ENCODE measurements at regions of chr16 and their contacts with region 1.

Region 1: DNA sequence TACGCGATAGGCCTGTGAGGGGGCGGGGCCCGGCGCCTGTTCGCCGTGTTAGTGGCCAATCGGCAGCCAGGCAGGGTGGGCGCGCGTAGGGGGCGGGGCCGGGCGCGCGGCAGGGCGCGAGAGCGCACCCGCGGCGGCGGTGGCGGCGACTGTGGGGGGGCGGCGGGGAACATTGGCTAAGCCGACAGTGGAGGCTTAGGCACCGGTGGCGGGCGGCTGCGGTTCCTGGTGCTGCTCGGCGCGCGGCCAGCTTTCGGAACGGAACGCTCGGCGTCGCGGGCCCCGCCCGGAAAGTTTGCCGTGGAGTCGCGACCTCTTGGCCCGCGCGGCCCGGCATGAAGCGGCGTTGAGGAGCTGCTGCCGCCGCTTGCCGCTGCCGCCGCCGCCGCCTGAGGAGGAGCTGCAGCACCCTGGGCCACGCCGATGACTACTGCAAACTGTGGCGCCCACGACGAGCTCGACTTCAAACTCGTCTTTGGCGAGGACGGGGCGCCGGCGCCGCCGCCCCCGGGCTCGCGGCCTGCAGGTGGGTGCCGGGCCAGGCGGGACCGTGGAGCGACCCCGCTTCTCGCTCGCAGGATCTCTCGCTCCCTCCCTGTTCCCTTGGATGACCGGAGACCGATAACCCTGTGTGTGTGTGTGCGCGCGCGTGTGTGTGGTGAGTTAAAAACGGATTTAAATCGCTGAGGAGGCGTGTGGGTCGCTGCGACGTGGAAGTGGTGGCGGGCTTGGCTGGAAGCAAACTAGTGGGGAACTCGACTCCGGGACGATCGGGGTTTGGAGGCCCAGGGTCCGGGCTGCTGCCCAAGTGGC is at the start of gene NFATC3:
- DNase-seq: peak; percentile 100
- ATAC-seq: peak; percentile 62
- H3K4me3 Mint-ChIP-seq: peak within 1 kb of the TSS; percentile 89
- H3K27ac Mint-ChIP-seq: peak within 1 kb of the TSS; percentile 94
- H3K4me1 Mint-ChIP-seq: peaks cover 64% of the 10 kb centered on the region
- H3K27me3 Mint-ChIP-seq: no peaks in the 10 kb centered on the region
- total RNA-seq, gene NFATC3: 68.4 to 81.2 TPM

Region 2: DNA sequence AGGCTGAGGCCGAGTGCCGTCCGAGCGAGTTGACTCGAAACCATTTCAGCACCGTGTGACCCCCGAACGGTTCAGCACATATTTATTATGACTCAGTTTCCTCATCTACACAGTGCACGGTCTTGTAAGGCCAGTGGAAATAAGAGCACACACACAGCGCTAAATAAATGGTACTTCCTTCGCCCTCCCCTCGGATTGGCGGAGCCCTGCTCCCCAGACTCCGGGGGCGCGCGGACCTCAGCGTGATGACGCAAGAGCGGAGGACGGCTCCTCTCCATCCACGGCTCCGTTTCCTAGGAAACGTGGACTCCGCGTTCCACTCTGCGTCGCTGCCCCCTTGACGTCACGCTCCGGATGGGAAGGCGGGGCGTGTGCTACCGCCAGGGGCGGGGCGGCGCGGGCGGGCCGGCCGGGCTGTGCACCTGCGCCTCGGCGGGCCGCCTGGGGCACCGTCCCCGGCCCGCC is 424.9 kb before region 1 on chr16 and contains the start of gene PARD6A:
- CTCF ChIA-PET with region 1: no interaction called
- POLR2A ChIA-PET with region 1: no interaction called
- intact Hi-C with region 1: loop called (anchors 1 kb)
- DNase-seq: peak; percentile 98
- ATAC-seq: peak; percentile 83
- H3K4me3 Mint-ChIP-seq: peak within 1 kb of the TSS; percentile 90
- H3K27ac Mint-ChIP-seq: peak within 1 kb of the TSS; percentile 91
- H3K4me1 Mint-ChIP-seq: peaks cover 21% of the 10 kb centered on the region
- H3K27me3 Mint-ChIP-seq: no peaks in the 10 kb centered on the region
- total RNA-seq, gene PARD6A: 7.8 to 8.7 TPM

Region 3: DNA sequence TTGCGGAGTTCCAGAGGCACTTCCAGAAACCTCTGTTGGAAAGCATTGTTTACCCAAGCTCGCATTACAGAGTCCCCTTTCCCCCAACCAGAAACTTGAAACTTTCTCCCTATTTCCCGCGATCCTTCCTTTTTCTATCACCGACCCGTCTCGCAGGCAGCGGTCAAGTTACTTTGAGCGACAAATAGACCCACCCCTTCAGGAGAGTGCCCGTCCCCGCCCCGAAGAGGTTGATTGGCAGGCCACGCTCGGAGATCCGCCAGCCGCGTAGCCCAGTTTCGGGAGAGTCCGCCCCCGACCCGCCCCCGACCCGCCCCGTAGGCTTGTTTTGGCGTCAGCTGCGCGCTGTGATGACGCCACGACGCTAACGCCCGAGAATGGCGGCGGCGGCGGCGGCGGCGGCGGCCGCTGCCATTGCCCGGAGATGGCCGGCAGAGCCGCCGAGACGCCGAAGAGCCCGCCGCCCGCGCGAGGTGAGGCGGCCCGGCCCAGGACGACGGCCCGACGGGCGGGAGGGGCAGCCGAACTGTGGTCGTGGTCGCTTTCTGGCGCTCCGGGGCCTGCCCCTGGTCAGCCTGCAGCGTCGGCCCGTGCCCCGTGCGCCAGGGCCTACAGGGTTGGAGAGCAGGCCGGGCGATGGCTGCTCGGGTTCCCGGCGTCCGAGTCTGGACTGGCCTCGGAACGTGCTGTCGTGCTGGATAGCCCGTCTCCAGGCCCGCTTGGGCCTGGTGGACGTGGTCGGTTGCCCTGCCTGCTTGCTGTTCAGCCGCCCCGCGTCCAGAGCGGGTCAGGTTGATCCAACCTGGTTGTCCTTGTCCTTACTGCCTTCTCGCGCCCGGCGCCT is 192.3 kb before region 1 on chr16 and contains the start of gene PSKH1:
- CTCF ChIA-PET with region 1: no interaction called
- POLR2A ChIA-PET with region 1: no interaction called
- intact Hi-C with region 1: loop called in 1 of 2 experiments (anchors 1 kb)
- DNase-seq: peak; percentile 97
- ATAC-seq: peak; percentile 99
- H3K4me3 Mint-ChIP-seq: peak within 1 kb of the TSS; percentile 92
- H3K27ac Mint-ChIP-seq: peak within 1 kb of the TSS; percentile 92
- H3K4me1 Mint-ChIP-seq: peaks cover 30% of the 10 kb centered on the region
- H3K27me3 Mint-ChIP-seq: no peaks in the 10 kb centered on the region
- total RNA-seq, gene PSKH1: 11.7 to 11.9 TPM

Region 4: GRCh38 chr16:67975321-67976105 is 110.0 kb before region 1 on chr16:
- CTCF ChIA-PET with region 1: no interaction called
- POLR2A ChIA-PET with region 1: no interaction called
- intact Hi-C with region 1: no loop called
- DNase-seq: no peak
- ATAC-seq: no peak
- H3K4me3 Mint-ChIP-seq: no peak overlapping the region
- H3K27ac Mint-ChIP-seq: no peak overlapping the region
- H3K4me1 Mint-ChIP-seq: no peaks in the 10 kb centered on the region
- H3K27me3 Mint-ChIP-seq: no peaks in the 10 kb centered on the region

Region 5: DNA sequence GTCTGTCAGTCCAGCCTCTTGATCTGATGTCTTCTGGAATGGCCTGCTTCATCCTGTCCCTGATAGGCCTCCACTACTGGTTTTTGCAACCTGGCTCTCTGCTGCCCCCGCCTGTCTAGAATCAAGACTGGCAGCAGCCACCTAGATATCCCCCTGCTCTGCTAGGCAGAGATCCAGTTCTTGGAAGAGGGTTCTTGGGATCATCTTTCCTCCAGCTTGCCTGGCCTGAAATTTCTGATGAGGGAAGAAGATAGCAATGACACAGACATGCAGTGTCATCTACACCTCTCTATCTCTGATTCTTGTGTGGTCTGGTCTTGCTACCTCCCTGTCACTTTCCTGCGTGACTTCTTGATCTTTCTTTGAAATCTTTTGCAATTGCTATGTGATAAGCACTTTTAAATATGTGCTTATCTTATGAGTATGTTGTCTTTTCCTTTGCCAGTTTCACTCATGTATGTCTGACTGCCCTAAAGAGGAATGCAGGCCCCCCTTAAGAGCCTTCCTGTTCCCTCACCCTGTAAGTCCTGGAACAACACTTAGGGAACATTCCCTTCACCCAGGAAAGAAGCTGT is 20.6 kb before region 1 on chr16:
- CTCF ChIA-PET with region 1: interaction called, 11 read pairs
- POLR2A ChIA-PET with region 1: no interaction called
- intact Hi-C with region 1: loop called in 1 of 2 experiments (anchors 2 kb)
- DNase-seq: peak; percentile 85
- ATAC-seq: peak; percentile 81
- H3K4me3 Mint-ChIP-seq: no peak overlapping the region
- H3K27ac Mint-ChIP-seq: peak overlapping the region; percentile 69
- H3K4me1 Mint-ChIP-seq: peaks cover 67% of the 10 kb centered on the region
- H3K27me3 Mint-ChIP-seq: no peaks in the 10 kb centered on the region

Region 6: DNA sequence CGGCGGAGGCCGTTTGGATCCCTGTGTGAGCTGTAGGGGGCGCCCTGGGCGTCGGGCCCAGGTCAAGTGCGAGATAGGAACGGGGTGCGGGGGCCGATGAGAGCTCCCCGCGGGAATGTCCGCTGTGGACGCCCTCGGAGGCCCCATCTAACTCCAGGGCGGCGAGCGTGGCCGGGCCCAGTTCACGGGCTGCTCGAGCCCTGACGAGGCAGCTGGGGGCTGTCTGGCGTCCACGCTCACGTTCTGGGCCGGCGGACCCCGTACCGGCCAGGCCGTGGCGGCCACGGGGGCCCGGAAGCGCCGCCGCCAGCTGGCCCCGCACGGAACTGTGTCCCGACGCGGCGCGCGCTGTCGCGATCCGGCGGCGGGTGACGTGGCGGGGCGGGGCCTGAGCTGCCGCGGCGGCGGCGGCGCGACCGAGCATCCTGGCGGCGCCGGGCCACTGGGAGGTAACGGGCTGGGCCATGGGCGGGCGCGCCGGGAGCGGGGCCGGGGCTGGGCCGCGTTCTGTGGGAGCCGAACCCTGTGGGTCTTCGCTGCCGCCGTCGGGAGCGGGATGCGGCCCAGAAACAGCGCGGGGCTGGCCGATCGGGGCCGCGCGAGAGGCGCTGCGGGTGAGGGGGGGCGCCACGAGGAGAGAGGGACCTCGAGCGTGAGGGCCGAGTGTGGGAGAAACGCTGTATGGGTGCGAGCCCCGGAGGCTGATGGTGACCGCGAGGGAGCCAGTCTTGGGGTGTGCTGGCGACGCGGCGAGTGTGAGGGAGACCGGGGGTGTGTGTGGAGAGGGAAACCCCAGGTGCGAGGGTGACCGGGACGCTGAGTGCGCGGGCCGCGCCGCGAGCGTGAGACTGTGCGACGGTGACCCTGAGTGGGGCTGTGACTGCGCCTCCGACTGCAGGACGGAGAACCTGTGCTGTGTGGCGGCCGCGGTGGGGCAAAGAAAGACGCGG is 178.9 kb after region 1 on chr16 and contains the start of gene SLC7A6:
- CTCF ChIA-PET with region 1: no interaction called
- POLR2A ChIA-PET with region 1: interaction called, 4 read pairs
- intact Hi-C with region 1: loop called in 1 of 2 experiments (anchors 1 kb)
- DNase-seq: peak; percentile 92
- ATAC-seq: peak; percentile 69
- H3K4me3 Mint-ChIP-seq: peak within 1 kb of the TSS; percentile 91
- H3K27ac Mint-ChIP-seq: peak within 1 kb of the TSS; percentile 97
- H3K4me1 Mint-ChIP-seq: peaks cover 43% of the 10 kb centered on the region
- H3K27me3 Mint-ChIP-seq: no peaks in the 10 kb centered on the region
- total RNA-seq, gene SLC7A6: 55.7 to 58.7 TPM

Region 7: GRCh38 chr16:68921654-68922053 is 836.2 kb after region 1 on chr16:
- CTCF ChIA-PET with region 1: no interaction called
- POLR2A ChIA-PET with region 1: no interaction called
- intact Hi-C with region 1: no loop called
- DNase-seq: no peak
- ATAC-seq: no peak
- H3K4me3 Mint-ChIP-seq: no peak overlapping the region
- H3K27ac Mint-ChIP-seq: no peak overlapping the region
- H3K4me1 Mint-ChIP-seq: no peaks in the 10 kb centered on the region
- H3K27me3 Mint-ChIP-seq: no peaks in the 10 kb centered on the region

Region 8: GRCh38 chr16:69132424-69133252 is 1047.2 kb after region 1 on chr16 and contains the starts of genes CHTF8 and UTP4:
- CTCF ChIA-PET with region 1: no interaction called
- POLR2A ChIA-PET with region 1: no interaction called
- intact Hi-C with region 1: loop called in 1 of 2 experiments (anchors 2 kb)
- DNase-seq: peak; percentile 94
- ATAC-seq: peak; percentile 95
- H3K4me3 Mint-ChIP-seq: peak within 1 kb of the TSS; percentile 93
- H3K27ac Mint-ChIP-seq: peak within 1 kb of the TSS; percentile 93
- H3K4me1 Mint-ChIP-seq: peaks cover 59% of the 10 kb centered on the region
- H3K27me3 Mint-ChIP-seq: no peaks in the 10 kb centered on the region
- total RNA-seq, gene CHTF8: 153 to 194 TPM
- total RNA-seq, gene UTP4: 102 to 119 TPM

Measured in activated CD4-positive, alpha-beta T cell treated with anti-CD3 and anti-CD28 coated beads for 36 hours (primary cell).